Aorta (tissue), 5 donors: ENCODE measurements at regions of chr20 and their contacts with region 1.

Region 1: DNA sequence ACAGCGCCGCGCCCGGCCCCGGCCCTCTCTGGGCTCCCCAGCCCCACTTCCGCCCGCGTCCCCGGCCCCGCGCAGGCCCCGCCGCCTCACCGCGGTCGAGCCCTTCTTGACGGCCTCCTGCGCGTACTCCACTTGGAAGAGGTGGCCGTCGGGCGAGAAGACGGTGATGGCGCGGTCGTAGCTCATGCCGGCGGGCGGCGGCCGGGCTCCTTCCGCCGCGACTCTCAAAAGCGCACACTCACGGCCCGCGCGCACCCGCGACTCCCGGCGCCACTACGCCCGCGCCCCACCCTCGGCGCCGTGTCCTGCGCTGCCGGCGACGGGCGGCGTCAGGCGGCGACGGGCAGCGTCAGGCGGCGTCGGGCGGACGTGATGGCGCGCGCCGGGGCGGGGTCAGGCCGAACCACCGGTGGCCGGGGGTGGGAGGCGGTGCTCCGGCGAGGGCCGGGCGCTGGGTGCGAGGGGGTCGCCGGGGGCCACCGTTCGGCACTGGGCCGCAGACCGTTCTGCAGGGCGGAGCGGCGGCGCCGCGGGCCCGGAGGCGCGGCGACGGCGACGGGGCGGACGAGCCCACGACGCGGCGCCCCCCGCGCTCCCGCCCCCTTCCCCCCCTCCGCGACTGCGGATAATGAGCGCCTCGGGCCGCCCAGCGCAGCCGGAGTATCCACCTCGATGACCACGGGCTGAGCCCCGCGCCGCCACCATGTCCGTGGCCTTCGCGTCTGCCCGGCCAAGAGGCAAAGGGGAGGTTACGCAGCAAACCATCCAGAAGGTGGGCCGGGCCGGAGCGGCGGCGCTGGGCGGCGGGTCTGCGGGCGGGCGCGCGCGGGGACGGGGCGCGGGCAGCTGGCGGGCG is at the starts of genes PSMA7 and SS18L1:
- DNase-seq: peak; percentile 92 to 95
- ATAC-seq: peak; percentile 94
- H3K4me3 ChIP-seq: peak within 1 kb of the TSS; percentile 96 to 98
- H3K27ac ChIP-seq: peak within 1 kb of the TSS; percentile 84 to 93
- H3K4me1 ChIP-seq: no peaks in the 10 kb centered on the region
- H3K27me3 ChIP-seq: no peaks in the 10 kb centered on the region
- total RNA-seq, gene PSMA7: 136 to 176 TPM
- total RNA-seq, gene SS18L1: 12.1 to 19.1 TPM

Region 2: DNA sequence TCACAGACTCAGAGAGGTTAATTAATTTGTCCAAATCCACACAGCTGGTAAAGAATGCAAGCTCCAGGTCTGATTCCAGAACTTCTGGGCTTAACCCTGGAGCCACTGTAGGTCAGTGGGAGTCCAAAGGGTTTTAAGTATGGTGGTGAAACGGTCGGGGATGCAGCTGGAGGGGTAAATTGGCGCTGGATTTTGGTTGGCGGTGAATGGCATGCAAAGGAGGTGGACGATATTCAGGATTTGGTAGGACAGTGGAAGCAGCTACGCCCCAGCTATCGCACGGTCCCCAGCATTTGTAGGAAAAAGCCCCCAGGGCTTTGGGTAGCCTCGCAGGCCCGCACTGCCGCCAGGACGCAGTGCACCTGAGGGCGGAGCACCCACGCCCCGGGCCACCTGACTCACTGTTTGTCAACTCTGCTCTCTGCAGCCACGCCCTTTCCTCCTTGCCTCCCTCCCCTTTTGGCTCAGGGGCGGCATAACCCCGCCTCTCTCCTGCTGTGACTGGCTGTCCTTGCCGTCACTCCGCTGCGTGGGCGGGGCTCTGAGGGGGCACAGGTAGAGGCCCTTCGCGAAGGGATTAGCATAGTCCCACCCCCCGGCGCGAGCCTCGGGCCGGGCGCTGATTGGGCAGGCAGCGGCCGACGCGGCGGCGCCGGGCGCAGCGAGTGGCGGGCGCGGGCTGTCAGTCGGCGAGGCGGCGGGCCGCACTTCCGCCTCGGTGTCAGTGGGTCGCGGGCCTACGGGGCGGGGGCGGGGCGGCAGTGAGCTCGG is 94.6 kb after region 1 on chr20 and contains the start of gene OSBPL2:
- intact Hi-C with region 1: loop called in 1 of 2 experiments (anchors 2 kb)
- DNase-seq: peak; percentile 99
- ATAC-seq: peak; percentile 100
- H3K4me3 ChIP-seq: peak within 1 kb of the TSS; percentile 90 to 93
- H3K27ac ChIP-seq: peak within 1 kb of the TSS; percentile 20 to 79
- H3K4me1 ChIP-seq: no peaks in the 10 kb centered on the region
- H3K27me3 ChIP-seq: no peaks in the 10 kb centered on the region
- total RNA-seq, gene OSBPL2: 58.0 to 71.3 TPM

Region 3: DNA sequence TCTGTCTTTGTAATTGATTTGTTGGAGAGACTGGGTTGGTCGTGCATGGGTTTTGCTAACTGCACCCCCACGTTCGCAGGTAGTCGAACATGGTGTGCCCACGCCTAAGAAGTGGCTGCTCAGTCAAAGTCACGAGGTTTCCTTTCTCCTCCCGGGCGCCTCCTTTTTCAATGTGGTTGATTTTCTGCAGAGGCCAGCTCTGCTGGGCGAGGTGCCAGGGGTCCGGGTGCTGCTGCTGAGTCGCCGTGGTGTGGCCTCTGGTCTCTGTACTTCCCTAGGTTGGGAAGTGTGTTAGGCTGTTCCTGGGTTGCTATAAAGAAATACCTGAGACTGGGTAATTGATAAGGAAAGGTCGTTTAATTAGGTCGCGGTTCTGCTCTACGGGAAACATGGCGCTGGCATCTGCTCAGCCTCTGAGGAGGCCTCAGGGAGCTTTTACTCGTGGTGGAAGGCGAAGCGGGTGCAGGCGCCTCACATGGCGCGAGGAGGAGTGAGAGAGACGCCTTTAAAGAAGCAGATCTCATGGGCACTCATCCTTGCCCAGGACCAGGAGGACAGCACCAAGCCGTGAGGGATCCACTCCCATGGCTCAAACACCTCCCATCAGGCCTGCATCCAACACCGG is 109.1 kb after region 1 on chr20:
- intact Hi-C with region 1: no loop called
- DNase-seq: no peak
- ATAC-seq: no peak
- H3K4me3 ChIP-seq: no peak overlapping the region
- H3K27ac ChIP-seq: no peak overlapping the region
- H3K4me1 ChIP-seq: no peaks in the 10 kb centered on the region
- H3K27me3 ChIP-seq: no peaks in the 10 kb centered on the region

Region 4: DNA sequence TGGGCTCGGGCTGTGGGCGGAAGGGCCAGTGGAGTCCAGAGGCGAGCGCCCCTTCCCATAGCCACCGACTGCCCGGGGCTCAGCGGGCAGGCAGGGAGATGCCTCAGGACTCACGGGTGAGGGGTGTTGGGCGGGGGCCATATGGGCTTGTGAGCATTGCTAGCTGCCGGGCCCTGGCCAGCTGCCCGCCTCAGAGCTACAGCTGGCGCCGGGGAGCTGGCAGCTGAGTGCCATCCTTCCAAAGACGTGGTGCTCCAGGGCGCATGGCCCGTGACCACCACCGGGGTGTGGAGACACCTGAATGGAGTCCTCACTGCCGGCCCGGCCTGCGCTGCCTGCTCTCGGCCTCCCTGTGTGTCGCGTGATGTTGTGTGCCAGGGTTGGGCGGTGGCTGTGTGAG is 294.6 kb after region 1 on chr20:
- intact Hi-C with region 1: no loop called
- DNase-seq: no peak
- ATAC-seq: no peak
- H3K4me3 ChIP-seq: no peak overlapping the region
- H3K27ac ChIP-seq: no peak overlapping the region
- H3K4me1 ChIP-seq: no peaks in the 10 kb centered on the region
- H3K27me3 ChIP-seq: no peaks in the 10 kb centered on the region

Region 5: GRCh38 chr20:62914970-62915457 is 771.7 kb after region 1 on chr20:
- intact Hi-C with region 1: no loop called
- DNase-seq: peak in 1 of 2 donors; percentile 48
- ATAC-seq: peak; percentile 72
- H3K4me3 ChIP-seq: no peak overlapping the region
- H3K27ac ChIP-seq: no peak overlapping the region
- H3K4me1 ChIP-seq: peaks cover 1 to 8% of the 10 kb centered on the region in 2 donors
- H3K27me3 ChIP-seq: no peaks in the 10 kb centered on the region